Naive thymus-derived CD4-positive, alpha-beta T cell (primary cell): ENCODE measurements at regions of chr7 and their contacts with region 1.

Region 1: GRCh38 chr7:1526251-1526763 is 4.2 kb upstream of the MAFK start:
- DNase-seq: no peak
- ATAC-seq: no peak
- H3K4me3 ChIP-seq: no peak overlapping the region
- H3K4me3 Mint-ChIP-seq: no peak overlapping the region
- H3K27ac ChIP-seq: no peak overlapping the region
- H3K27ac Mint-ChIP-seq: peak overlapping the region in 1 of 9 donors; percentile 9
- H3K4me1 ChIP-seq: no peaks in the 10 kb centered on the region
- H3K4me1 Mint-ChIP-seq: peaks cover 0 to 8% (median under 1%) of the 10 kb centered on the region in 7 donors
- H3K27me3 ChIP-seq: no peaks in the 10 kb centered on the region
- H3K27me3 Mint-ChIP-seq: peaks cover 0 to 15% (median 4%) of the 10 kb centered on the region in 5 donors

Region 2: DNA sequence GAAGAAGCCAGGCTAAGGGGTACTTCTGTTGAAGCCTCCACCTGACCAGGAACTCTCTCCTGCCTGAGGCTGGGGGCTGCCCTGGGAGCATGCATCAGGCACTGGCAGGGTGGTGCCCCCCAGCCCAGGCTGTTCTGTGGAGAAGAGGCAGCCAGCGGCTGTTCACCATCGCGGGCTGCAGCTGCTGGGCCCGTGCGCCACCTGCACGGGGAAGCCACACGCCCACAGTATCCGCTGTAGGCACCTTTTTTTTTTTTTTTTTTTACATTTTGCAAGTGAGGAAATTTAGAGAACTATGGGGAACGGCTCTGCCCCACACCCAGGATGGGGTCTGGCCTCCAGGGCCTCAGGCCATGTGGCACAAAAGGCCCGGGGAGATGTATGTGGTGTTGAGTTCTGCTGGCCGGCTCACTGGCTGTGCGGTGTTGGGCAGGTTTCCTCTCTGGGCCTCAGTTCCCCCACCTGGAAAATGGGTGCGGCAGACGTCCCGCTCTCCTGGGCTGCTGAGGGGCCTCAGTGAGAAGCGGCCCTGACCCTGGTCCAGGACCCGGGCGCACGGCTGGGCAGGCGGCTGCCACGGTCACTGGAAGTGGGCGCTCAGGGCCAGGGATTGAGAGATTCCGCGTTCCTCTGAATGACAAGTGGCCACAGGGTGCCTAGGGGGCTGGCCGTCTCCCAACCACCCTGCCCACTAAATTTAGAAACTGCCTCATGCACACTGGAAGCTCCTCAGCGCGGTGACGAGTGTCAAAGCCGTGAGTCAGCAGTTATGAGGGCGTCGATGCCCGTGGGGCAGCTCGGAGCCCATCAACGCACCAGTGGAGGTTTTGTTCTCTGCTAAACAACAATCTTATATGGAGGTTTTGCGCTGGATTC is 13.3 kb before region 1 on chr7:
- CTCF ChIA-PET with region 1: no interaction called
- POLR2A ChIA-PET with region 1: interaction called, 6 read pairs
- intact Hi-C with region 1: loop called (anchors 1 to 2 kb)
- DNase-seq: peak; percentile 34 to 71 (median 67)
- ATAC-seq: peak; percentile 82
- H3K4me3 ChIP-seq: no peak overlapping the region
- H3K4me3 Mint-ChIP-seq: peak overlapping the region; percentile 12 to 75 (median 62)
- H3K27ac ChIP-seq: no peak overlapping the region
- H3K27ac Mint-ChIP-seq: peak overlapping the region; percentile 15 to 87 (median 68)
- H3K4me1 ChIP-seq: peaks cover 4 to 27% of the 10 kb centered on the region in 2 donors
- H3K4me1 Mint-ChIP-seq: peaks cover 14 to 45% (median 20%) of the 10 kb centered on the region in 7 donors
- H3K27me3 ChIP-seq: no peaks in the 10 kb centered on the region
- H3K27me3 Mint-ChIP-seq: no peaks in the 10 kb centered on the region